Sigmoid colon (tissue), 7 donors: ENCODE measurements at regions of chr11 and their contacts with region 1.

Region 1: GRCh38 chr11:125625630-125626287 is 796 bp downstream of the CHEK1 start:
- DNase-seq: peak; percentile 92
- H3K4me3 ChIP-seq: peak overlapping the region; percentile 64 to 69 (median 67)
- H3K27ac ChIP-seq: peak overlapping the region; percentile 86 to 96 (median 94)
- H3K4me1 ChIP-seq: peaks cover 0 to 45% (median 21%) of the 10 kb centered on the region in 4 donors
- H3K27me3 ChIP-seq: no peaks in the 10 kb centered on the region
- CTCF ChIP-seq: no peak
- EP300 ChIP-seq: no peak
- POLR2A ChIP-seq: peak; percentile 29 to 61

Region 2: DNA sequence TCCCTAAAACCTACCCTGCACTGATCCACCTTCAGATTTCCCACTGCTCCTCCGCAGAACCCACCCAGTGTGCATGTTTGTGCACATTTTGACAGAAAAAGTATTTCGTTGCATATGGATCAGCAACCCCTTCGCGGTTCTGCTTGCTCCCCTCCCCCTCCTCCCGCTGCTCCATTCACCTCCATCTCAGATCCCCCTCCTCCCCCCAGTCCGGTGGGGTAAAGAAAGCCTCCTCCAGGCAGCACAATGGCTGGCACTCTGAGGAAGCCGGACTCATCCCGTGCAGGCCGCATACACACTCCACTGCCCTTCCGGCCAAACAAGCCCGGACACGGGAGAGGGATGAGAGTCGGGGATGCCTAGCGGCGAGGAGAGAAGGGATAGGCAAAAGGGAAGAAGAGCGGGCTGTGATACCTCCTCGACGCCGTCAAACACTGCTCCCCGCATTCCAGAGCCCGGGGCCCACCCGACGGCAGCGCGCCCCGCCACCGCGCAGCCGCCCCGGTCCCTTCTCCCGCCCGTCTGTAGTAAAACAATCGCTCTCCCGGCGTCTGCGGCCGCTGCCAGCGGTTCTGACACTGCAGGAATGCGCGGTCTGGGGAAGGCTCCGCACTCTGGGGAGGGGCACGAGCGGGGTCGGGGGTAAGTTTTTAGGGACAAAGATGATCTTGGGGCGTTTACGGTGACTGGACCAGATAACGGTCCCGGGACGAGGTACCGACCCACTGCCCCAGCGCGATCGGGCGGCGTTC is 130.6 kb before region 1 on chr11:
- intact Hi-C with region 1: loop called (anchors 10 kb)
- DNase-seq: peak; percentile 77
- H3K4me3 ChIP-seq: peak overlapping the region; percentile 58 to 84 (median 70)
- H3K27ac ChIP-seq: peak overlapping the region; percentile 83 to 90 (median 86)
- H3K4me1 ChIP-seq: peaks cover 0 to 13% (median 12%) of the 10 kb centered on the region in 4 donors
- H3K27me3 ChIP-seq: no peaks in the 10 kb centered on the region
- CTCF ChIP-seq: no peak
- EP300 ChIP-seq: no peak
- POLR2A ChIP-seq: no peak

Region 3: GRCh38 chr11:125568970-125569914 is 56.5 kb before region 1 on chr11 and contains the start of gene EI24:
- intact Hi-C with region 1: loop called (anchors 10 kb)
- DNase-seq: peak; percentile 94
- H3K4me3 ChIP-seq: peak within 1 kb of the TSS; percentile 74 to 97 (median 88)
- H3K27ac ChIP-seq: peak within 1 kb of the TSS; percentile 86 to 94 (median 86)
- H3K4me1 ChIP-seq: peaks cover 0 to 20% (median 11%) of the 10 kb centered on the region in 4 donors
- H3K27me3 ChIP-seq: no peaks in the 10 kb centered on the region
- CTCF ChIP-seq: peak; percentile 67 to 80 (median 71)
- EP300 ChIP-seq: no peak
- POLR2A ChIP-seq: no peak
- total RNA-seq, gene EI24: 74.5 to 109 (median 86.6) TPM

Region 4: DNA sequence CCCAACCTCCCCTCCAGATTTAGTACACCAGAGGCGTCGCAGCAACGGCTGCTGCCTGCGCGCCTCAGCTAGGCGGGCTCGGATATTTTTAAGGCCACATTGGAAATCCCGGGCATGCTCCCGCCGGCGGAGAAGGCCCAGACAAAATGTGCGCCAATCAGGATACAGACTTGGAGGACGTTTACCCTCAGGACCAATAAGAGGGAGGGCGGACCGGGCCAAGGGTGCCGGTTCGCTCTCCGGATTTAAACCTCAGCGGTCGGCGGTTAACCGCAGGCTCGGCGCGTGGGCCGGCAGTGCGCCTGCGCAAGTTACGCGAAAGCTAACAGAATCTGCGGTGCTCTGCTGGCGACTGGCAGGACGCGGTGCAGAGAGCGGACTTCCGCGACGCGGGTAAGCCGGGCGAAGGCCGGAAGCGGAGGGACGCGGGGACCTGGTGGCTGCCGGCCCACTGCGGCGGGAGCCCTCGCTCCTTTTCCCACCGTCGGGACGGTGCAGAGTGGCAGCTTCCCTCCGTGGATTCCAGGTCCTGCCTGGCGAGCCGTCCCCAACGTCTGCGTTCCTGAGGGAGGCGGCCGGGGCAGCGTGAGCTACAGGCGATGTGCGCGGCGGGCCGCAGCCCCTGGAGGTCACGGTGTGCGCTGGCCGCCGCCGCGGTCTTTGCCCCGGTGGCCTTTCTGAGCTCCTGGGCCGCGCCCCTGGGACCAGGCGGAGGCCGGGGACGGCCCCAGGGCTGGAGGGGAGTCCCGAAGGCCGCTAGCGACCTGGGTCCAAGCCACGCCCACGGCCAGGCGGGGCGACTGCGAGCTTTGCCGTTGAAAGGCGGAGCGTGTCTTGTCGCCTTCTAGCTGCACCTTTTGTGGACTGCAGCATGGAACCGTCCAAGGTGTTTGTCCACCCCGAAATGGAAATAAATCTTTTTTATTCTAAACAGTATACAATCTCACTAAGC is 261.9 kb after region 1 on chr11 and contains the start of gene HYLS1:
- intact Hi-C with region 1: loop called (anchors 5 kb)
- DNase-seq: peak; percentile 98
- H3K4me3 ChIP-seq: peak within 1 kb of the TSS; percentile 59 to 88 (median 70)
- H3K27ac ChIP-seq: peak within 1 kb of the TSS; percentile 93 to 99 (median 96)
- H3K4me1 ChIP-seq: peaks cover 0 to 13% (median 5%) of the 10 kb centered on the region in 4 donors
- H3K27me3 ChIP-seq: no peaks in the 10 kb centered on the region
- CTCF ChIP-seq: peak in 1 of 4 experiments; percentile 19
- EP300 ChIP-seq: peak in 1 of 4 donors; percentile 24
- POLR2A ChIP-seq: peak; percentile 30 to 48
- total RNA-seq, gene HYLS1: 6.1 to 8.7 (median 6.9) TPM